Heart left ventricle (tissue), 16 donors: ENCODE measurements at regions of chr2 and their contacts with region 1.

Region 1: DNA sequence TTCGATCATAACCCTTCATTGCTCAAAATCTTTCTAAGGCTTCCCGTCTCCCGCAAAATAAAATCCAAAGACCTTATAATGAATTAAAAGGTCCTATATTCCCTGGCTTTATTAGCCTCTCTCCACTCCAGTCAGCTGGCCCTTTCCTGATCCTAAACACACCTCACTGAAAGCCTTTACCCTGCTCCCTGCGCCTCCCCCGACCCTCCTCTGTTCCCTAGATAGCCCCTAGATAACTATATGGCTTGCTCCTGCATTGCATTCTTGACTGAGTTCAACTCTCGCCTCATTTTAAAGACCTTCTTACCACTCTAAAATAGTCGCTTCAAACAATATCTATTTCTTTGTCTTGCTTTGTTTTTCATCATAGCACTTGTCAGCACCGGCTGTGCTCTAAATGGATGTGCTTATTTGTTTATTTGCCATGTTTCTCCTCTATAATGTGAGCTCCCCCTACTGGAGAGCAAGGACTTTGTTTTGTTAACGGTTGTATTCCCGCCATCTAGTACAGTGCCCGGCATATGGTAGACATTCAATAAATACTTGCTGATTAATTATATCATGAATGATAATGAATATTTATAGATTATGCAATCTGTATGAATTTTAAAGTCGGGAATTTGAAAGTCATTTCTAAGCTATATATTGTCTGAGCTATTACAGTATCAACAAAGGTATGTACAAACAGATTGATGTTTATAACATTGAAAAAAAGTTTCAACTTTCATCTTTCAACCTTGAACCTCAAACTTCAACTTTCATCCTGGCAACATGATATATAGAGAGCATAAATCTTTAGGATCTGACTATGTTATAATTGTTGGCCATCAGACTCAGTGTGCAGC is 32.4 kb upstream of the VIT start:
- DNase-seq: peak in 1 of 5 donors; percentile 20
- ATAC-seq: peak; percentile 73 to 90 (median 84)
- H3K4me3 ChIP-seq: no peak overlapping the region
- H3K27ac ChIP-seq: no peak overlapping the region
- H3K4me1 ChIP-seq: peaks cover 0 to 6% (median 0%) of the 10 kb centered on the region in 12 donors
- H3K27me3 ChIP-seq: peaks cover 0 to 6% (median 0%) of the 10 kb centered on the region in 9 donors
- CTCF ChIP-seq: peak; percentile 66 to 88 (median 79)
- POLR2A ChIP-seq: no peak

Region 2: DNA sequence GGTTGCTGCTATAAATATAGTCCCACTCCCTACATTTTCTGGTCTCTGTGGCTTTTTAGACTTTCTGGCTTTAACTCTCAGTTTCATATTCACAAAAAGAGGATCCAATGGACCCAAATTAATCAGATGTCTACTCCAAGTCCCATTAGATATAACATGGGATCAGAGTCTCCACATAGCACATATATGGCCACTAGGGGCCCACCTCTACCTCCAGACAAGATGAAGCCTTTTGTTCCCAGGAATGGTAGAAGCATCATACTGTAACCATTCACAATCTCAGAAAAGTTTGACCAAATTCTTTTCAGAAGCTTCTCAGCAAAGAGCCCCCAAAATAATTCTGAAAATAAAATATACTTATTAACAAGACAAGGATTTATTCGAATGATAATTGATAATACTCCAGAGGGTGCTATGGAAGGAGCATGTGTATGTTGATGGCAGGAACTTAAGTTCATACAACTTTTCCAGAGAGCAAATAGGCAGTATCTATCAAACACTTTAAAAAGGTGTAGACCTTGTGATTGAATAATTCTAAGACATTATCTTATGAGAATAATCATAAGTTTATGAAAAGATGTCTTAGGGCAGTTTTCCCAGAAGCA is 690.8 kb before region 1 on chr2:
- intact Hi-C with region 1: loop called in 1 of 10 experiments (anchors 10 kb)
- DNase-seq: no peak
- ATAC-seq: peak in 2 of 4 donors; percentile 54 to 81
- H3K4me3 ChIP-seq: no peak overlapping the region
- H3K27ac ChIP-seq: peak overlapping the region in 11 of 12 donors; percentile 21 to 86 (median 59)
- H3K4me1 ChIP-seq: peaks cover 0 to 3% (median 0%) of the 10 kb centered on the region in 12 donors
- H3K27me3 ChIP-seq: no peaks in the 10 kb centered on the region
- CTCF ChIP-seq: peak; percentile 24 to 57 (median 42)
- POLR2A ChIP-seq: no peak

Region 3: DNA sequence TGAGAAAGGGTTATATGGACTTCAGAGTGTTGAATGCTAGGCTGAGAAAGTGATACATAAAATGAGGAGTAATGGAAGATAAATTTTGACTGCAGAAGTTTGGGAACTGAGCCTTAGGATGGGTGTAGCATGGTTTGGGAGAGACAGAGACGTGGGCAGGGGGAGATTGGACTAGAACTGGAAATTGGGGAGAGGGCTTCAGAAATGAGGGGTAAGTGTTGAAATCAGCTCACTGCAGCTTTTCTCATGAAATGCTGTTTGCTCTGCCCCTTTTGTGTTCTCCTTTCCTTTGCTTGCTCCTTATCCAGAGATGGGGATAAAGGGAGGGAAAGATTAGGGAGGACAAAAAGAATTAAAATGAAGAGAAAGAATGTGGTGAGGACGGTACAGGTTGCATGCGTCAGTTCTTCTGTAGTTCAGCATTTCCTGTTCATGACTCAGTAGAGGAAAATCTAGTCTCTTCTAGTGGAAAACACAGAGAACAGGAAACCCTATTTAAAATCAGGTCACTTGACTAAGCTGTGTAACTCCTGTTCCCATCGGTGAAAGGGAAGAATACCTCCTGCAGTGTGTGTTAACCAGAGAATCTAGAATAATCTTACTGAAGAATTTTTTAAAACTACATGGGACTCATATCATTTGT is 202.9 kb before region 1 on chr2:
- intact Hi-C with region 1: loop called in 1 of 10 experiments (anchors 5 kb)
- DNase-seq: no peak
- ATAC-seq: peak in 3 of 4 donors; percentile 37 to 57 (median 37)
- H3K4me3 ChIP-seq: no peak overlapping the region
- H3K27ac ChIP-seq: peak overlapping the region in 5 of 12 donors; percentile 8 to 50 (median 31)
- H3K4me1 ChIP-seq: peaks cover 3 to 67% (median 38%) of the 10 kb centered on the region in 12 donors
- H3K27me3 ChIP-seq: no peaks in the 10 kb centered on the region
- CTCF ChIP-seq: no peak
- POLR2A ChIP-seq: no peak

Region 4: GRCh38 chr2:36507408-36507812 is 156.7 kb before region 1 on chr2:
- intact Hi-C with region 1: loop called in 5 of 10 experiments (anchors 5 to 10 kb)
- DNase-seq: peak in 4 of 5 donors; percentile 33 to 51 (median 42)
- ATAC-seq: peak; percentile 78 to 95 (median 92)
- H3K4me3 ChIP-seq: no peak overlapping the region
- H3K27ac ChIP-seq: no peak overlapping the region
- H3K4me1 ChIP-seq: no peaks in the 10 kb centered on the region
- H3K27me3 ChIP-seq: no peaks in the 10 kb centered on the region
- CTCF ChIP-seq: peak; percentile 65 to 88 (median 76)
- POLR2A ChIP-seq: no peak

Region 5: GRCh38 chr2:36530178-36530982 is 133.7 kb before region 1 on chr2:
- intact Hi-C with region 1: loop called in 5 of 10 experiments (anchors 10 kb)
- DNase-seq: no peak
- ATAC-seq: peak in 3 of 4 donors; percentile 4 to 28 (median 11)
- H3K4me3 ChIP-seq: peak overlapping the region in 1 of 12 donors; percentile 4
- H3K27ac ChIP-seq: peak overlapping the region in 9 of 12 donors; percentile 0 to 64 (median 41)
- H3K4me1 ChIP-seq: peaks cover 0 to 47% (median 17%) of the 10 kb centered on the region in 12 donors
- H3K27me3 ChIP-seq: no peaks in the 10 kb centered on the region
- CTCF ChIP-seq: no peak
- POLR2A ChIP-seq: no peak

Region 6: GRCh38 chr2:36597532-36598377 is 66.3 kb before region 1 on chr2 and contains the start of gene FEZ2:
- intact Hi-C with region 1: loop called in 1 of 10 experiments (anchors 5 kb)
- DNase-seq: peak; percentile 80 to 90 (median 84)
- ATAC-seq: peak; percentile 91 to 99 (median 98)
- H3K4me3 ChIP-seq: peak within 1 kb of the TSS; percentile 76 to 100 (median 99)
- H3K27ac ChIP-seq: peak within 1 kb of the TSS; percentile 85 to 100 (median 98)
- H3K4me1 ChIP-seq: peaks cover 0 to 29% (median 18%) of the 10 kb centered on the region in 12 donors
- H3K27me3 ChIP-seq: no peaks in the 10 kb centered on the region
- CTCF ChIP-seq: peak in 3 of 12 donors; percentile 12 to 18 (median 16)
- POLR2A ChIP-seq: peak in 1 of 2 donors; percentile 44
- total RNA-seq, gene FEZ2: 39.4 to 55.4 (median 50.2) TPM